ENCODE measurements at regions of chr14 and their contacts with region 1.

Region 1: GRCh38 chr14:81464247-81465002 is 64.3 kb upstream of the STON2 start:
- DNase-seq: peak; percentile 75
- H3K4me3 Mint-ChIP-seq: peak overlapping the region; percentile 40
- H3K27ac Mint-ChIP-seq: no peak overlapping the region
- H3K4me1 Mint-ChIP-seq: no peaks in the 10 kb centered on the region
- H3K27me3 Mint-ChIP-seq: no peaks in the 10 kb centered on the region
- CTCF ChIP-seq: peak; percentile 67

Region 2: DNA sequence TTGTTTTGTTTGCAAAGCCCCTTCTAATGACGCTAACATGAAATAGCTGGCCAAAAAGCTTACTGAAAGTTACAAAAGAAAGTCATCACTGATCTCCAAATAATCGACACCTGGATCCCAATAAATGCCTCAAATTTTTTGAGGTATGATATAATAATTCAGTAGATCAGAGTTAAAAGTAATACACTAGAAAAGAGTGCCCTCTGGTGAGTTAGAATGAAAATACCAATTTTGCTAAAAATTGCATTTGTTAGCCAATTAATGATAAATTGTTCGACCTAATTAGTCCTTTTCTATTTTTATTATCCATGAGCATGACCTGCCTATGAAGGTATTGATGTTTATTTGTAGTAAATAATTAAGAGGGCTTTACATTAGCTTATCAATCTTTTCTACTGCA is 601.4 kb before region 1 on chr14:
- CTCF ChIA-PET with region 1: no interaction called
- POLR2A ChIA-PET with region 1: no interaction called
- intact Hi-C with region 1: loop called (anchors 10 kb)
- DNase-seq: no peak
- H3K4me3 Mint-ChIP-seq: no peak overlapping the region
- H3K27ac Mint-ChIP-seq: no peak overlapping the region
- H3K4me1 Mint-ChIP-seq: no peaks in the 10 kb centered on the region
- H3K27me3 Mint-ChIP-seq: no peaks in the 10 kb centered on the region
- CTCF ChIP-seq: peak; percentile 27

Region 3: DNA sequence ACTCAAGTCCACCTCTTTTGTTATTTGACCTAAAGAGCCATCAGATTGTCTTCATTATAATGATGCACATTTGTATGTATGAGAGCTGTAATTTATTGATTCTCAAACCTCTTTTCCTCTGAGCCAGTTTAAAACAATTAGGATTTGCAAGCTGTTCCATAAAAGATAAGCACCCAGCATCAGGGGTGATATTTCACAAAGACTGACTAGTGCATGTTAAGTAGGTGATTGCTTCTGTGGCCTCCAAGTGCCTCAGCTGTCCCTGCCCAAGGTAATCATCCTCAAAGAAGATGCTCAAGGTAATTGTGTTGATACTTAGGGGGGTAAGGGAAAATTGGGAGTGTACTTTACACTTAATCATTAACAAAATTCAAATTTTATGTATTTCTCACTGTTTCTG is 541.1 kb before region 1 on chr14:
- CTCF ChIA-PET with region 1: no interaction called
- POLR2A ChIA-PET with region 1: no interaction called
- intact Hi-C with region 1: no loop called
- DNase-seq: no peak
- H3K4me3 Mint-ChIP-seq: no peak overlapping the region
- H3K27ac Mint-ChIP-seq: no peak overlapping the region
- H3K4me1 Mint-ChIP-seq: peaks cover 4% of the 10 kb centered on the region
- H3K27me3 Mint-ChIP-seq: no peaks in the 10 kb centered on the region
- CTCF ChIP-seq: no peak

Region 4: GRCh38 chr14:81220830-81221578 is 243.4 kb before region 1 on chr14 and contains the start of gene GTF2A1:
- CTCF ChIA-PET with region 1: interaction called, 6 read pairs
- POLR2A ChIA-PET with region 1: interaction called, 10 read pairs
- intact Hi-C with region 1: no loop called
- DNase-seq: peak; percentile 94
- H3K4me3 Mint-ChIP-seq: peak within 1 kb of the TSS; percentile 93
- H3K27ac Mint-ChIP-seq: peak within 1 kb of the TSS; percentile 99
- H3K4me1 Mint-ChIP-seq: peaks cover 6% of the 10 kb centered on the region
- H3K27me3 Mint-ChIP-seq: no peaks in the 10 kb centered on the region
- CTCF ChIP-seq: no peak
- total RNA-seq, gene GTF2A1: 35.0 and 49.4 TPM in 2 replicates

Region 5: GRCh38 chr14:81252273-81252672 is 212.2 kb before region 1 on chr14:
- CTCF ChIA-PET with region 1: interaction called, 11 read pairs
- POLR2A ChIA-PET with region 1: no interaction called
- intact Hi-C with region 1: no loop called
- DNase-seq: no peak
- H3K4me3 Mint-ChIP-seq: no peak overlapping the region
- H3K27ac Mint-ChIP-seq: no peak overlapping the region
- H3K4me1 Mint-ChIP-seq: no peaks in the 10 kb centered on the region
- H3K27me3 Mint-ChIP-seq: no peaks in the 10 kb centered on the region
- CTCF ChIP-seq: no peak

Region 6: DNA sequence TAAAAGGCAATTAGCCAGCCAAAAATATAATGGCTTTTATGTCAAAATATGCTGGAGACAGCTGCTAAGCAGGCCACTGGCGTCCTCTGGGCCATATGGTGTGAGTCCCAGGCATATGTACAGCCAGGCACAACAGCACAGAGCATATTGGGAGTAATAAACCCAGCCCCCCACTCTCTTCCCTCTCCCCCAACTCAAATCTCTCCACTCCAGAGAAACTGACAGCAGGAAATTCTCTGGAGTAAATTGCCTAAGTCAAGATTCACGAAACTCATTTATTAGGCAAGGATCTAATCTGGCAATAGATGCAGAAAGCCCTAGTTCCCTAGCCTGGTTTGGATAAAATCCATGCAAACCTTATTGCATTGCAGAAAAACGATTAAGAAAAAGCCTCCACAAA is 217.1 kb after region 1 on chr14:
- CTCF ChIA-PET with region 1: no interaction called
- POLR2A ChIA-PET with region 1: no interaction called
- intact Hi-C with region 1: no loop called
- DNase-seq: no peak
- H3K4me3 Mint-ChIP-seq: no peak overlapping the region
- H3K27ac Mint-ChIP-seq: no peak overlapping the region
- H3K4me1 Mint-ChIP-seq: peaks cover 5% of the 10 kb centered on the region
- H3K27me3 Mint-ChIP-seq: peaks cover 23% of the 10 kb centered on the region
- CTCF ChIP-seq: no peak

Region 7: DNA sequence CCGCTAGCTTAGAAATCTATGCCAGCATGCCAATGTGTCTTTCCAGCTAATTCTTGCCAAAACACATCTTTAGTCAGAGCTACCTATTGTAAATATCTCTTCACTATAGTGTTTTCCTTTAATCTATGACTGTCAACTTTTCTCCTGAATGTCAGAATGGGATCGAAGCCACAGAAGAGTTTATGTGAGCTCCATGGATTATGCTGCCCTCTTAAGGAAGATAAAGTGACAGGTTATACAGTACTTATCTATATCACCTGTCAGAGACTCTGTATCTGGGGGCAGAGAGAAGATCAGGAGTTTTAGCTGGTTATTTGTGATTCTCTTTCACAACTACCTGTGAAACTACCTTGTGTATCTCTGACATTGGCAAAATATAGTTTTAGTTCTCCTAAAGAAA is 273.5 kb after region 1 on chr14:
- CTCF ChIA-PET with region 1: no interaction called
- POLR2A ChIA-PET with region 1: no interaction called
- intact Hi-C with region 1: no loop called
- DNase-seq: no peak
- H3K4me3 Mint-ChIP-seq: no peak overlapping the region
- H3K27ac Mint-ChIP-seq: no peak overlapping the region
- H3K4me1 Mint-ChIP-seq: no peaks in the 10 kb centered on the region
- H3K27me3 Mint-ChIP-seq: no peaks in the 10 kb centered on the region
- CTCF ChIP-seq: no peak